CD4-positive, alpha-beta T cell (primary cell): ENCODE measurements at regions of chr2 and their contacts with region 1.

Region 1: DNA sequence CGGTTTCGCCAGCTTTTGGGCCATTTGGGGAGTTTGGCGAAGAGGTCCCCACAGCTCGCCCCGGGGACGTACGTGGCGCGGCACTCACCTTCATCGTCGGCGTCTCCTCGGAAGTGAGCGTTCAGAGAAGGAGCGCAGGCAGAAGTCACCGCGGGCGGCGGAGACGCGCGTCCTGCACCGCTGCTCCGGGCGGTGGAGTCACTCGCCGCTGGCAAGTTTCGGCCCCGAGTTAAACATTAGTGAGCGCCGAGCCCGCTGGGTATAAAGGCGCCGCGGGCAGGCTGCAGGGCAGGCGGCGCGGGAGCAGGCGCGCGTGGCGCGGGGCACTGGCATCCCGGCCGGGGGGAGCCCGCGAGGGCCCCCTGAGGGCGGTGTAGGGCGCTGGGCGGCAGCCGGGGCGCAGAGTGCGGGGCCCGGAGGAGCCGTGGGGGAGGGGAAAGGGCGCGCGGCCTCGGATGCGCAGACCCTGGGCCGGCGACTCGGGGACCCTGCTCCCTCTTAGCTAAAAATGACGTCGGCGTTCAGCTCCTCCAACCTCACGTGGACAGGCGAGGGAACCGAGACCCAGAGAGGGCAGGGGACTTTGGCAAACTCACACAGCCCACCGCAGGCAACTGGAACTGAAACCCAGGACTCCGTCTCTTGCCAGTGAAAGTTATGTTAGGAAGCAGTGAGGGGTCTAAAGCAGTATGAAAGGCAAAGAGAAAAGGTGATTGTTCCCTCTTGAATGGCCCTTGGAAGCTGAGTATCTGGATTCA is at the start of gene DPP4:
- DNase-seq: peak; percentile 21 to 78 (median 48)
- ATAC-seq: peak; percentile 80
- H3K4me3 ChIP-seq: peak within 1 kb of the TSS; percentile 85
- H3K4me3 Mint-ChIP-seq: peak within 1 kb of the TSS; percentile 95
- H3K27ac ChIP-seq: peak within 1 kb of the TSS; percentile 57 to 60
- H3K27ac Mint-ChIP-seq: peak within 1 kb of the TSS; percentile 85
- H3K4me1 ChIP-seq: peaks cover 23% of the 10 kb centered on the region
- H3K4me1 Mint-ChIP-seq: peaks cover 52% of the 10 kb centered on the region
- H3K27me3 ChIP-seq: no peaks in the 10 kb centered on the region
- H3K27me3 Mint-ChIP-seq: no peaks in the 10 kb centered on the region
- CTCF ChIP-seq: no peak
- total RNA-seq, gene DPP4: 15.5 to 16.7 TPM

Region 2: DNA sequence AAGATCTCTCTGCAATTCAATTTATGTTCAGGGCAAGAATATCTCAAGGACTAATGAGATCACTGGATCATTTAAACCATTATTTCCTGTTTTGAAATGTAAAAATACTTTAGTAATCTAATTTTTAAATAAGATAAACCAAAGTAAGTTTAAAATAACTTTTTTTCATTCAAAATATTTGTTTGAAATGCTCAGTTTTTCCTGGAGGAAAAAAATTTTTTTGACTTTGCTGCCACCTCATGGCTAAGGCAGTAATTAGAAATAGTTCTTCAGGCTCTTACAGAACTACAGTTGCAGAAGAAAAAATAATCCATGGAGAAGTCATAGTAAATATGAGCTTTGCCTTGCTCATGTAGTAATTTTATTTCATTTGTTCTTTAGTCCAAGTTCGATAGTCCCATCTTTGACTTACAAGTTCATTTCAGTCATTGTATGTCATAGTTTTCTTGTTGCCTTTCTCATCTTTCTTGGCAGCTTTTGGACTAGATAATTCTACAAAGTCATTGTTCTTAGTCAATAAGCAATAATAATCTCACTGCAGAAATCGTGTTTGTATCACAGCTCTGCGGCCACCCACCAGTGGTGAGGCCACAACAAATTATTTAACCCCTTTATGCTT is 127.5 kb before region 1 on chr2:
- CTCF ChIA-PET with region 1: no interaction called
- POLR2A ChIA-PET with region 1: no interaction called
- intact Hi-C with region 1: no loop called
- DNase-seq: peak in 4 of 14 experiments; percentile 12 to 48 (median 41)
- ATAC-seq: no peak
- H3K4me3 ChIP-seq: no peak overlapping the region
- H3K4me3 Mint-ChIP-seq: no peak overlapping the region
- H3K27ac ChIP-seq: no peak overlapping the region
- H3K27ac Mint-ChIP-seq: no peak overlapping the region
- H3K4me1 ChIP-seq: no peaks in the 10 kb centered on the region
- H3K4me1 Mint-ChIP-seq: no peaks in the 10 kb centered on the region
- H3K27me3 ChIP-seq: no peaks in the 10 kb centered on the region
- H3K27me3 Mint-ChIP-seq: no peaks in the 10 kb centered on the region
- CTCF ChIP-seq: peak; percentile 78

Region 3: GRCh38 chr2:161992526-161992925 is 81.5 kb before region 1 on chr2:
- CTCF ChIA-PET with region 1: interaction called, 3 read pairs
- POLR2A ChIA-PET with region 1: interaction called, 11 read pairs
- intact Hi-C with region 1: no loop called
- DNase-seq: peak; percentile 18 to 83 (median 44)
- ATAC-seq: peak; percentile 75
- H3K4me3 ChIP-seq: peak overlapping the region; percentile 27
- H3K4me3 Mint-ChIP-seq: peak overlapping the region; percentile 88
- H3K27ac ChIP-seq: peak overlapping the region; percentile 65 to 78
- H3K27ac Mint-ChIP-seq: peak overlapping the region; percentile 94
- H3K4me1 ChIP-seq: peaks cover 34% of the 10 kb centered on the region
- H3K4me1 Mint-ChIP-seq: peaks cover 51% of the 10 kb centered on the region
- H3K27me3 ChIP-seq: no peaks in the 10 kb centered on the region
- H3K27me3 Mint-ChIP-seq: no peaks in the 10 kb centered on the region
- CTCF ChIP-seq: no peak

Region 4: GRCh38 chr2:162007447-162008040 is 66.5 kb before region 1 on chr2:
- CTCF ChIA-PET with region 1: interaction called, 4 read pairs
- POLR2A ChIA-PET with region 1: interaction called, 48 read pairs
- intact Hi-C with region 1: loop called in 1 of 2 experiments (anchors 2 kb)
- DNase-seq: peak in 3 of 14 experiments; percentile 55 to 61 (median 55)
- ATAC-seq: no peak
- H3K4me3 ChIP-seq: no peak overlapping the region
- H3K4me3 Mint-ChIP-seq: no peak overlapping the region
- H3K27ac ChIP-seq: no peak overlapping the region
- H3K27ac Mint-ChIP-seq: peak overlapping the region; percentile 7
- H3K4me1 ChIP-seq: peaks cover 15% of the 10 kb centered on the region
- H3K4me1 Mint-ChIP-seq: peaks cover 53% of the 10 kb centered on the region
- H3K27me3 ChIP-seq: no peaks in the 10 kb centered on the region
- H3K27me3 Mint-ChIP-seq: no peaks in the 10 kb centered on the region
- CTCF ChIP-seq: peak; percentile 89

Region 5: DNA sequence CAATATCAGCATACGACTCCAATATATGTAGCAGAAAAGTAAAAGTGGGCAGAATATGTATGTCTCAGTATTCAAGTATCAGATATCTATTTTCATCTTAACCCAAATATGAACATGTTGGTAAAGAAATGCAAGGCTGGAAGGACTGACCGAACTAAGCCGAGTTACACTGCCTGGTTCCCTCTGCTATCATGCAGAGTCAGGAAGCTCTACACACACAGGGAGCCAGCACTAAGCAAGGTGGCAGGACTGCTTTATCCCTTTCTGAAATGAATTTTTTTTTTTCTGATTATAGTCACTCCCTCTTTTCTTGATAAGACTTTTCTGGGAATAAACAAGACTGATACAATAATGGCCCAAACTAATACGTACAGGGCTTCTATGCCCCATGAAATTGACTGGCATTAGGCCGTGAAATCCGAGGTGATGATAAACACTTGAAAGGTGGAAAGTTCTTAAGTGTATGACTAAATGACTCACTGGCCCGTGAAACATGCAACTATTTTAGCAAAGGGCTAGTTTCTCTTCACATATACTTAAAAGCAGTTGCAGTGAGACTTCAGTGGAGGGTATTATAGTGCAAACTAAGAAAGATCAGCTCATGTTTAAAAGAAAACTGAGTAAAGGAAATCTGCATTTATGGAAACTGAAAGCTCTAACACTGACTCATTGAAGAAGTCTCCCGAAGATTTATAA is 14.9 kb before region 1 on chr2:
- CTCF ChIA-PET with region 1: interaction called, 3 read pairs
- POLR2A ChIA-PET with region 1: interaction called, 37 read pairs
- intact Hi-C with region 1: loop called in 1 of 2 experiments (anchors 2 kb)
- DNase-seq: peak in 4 of 14 experiments; percentile 25 to 40 (median 32)
- ATAC-seq: peak; percentile 34
- H3K4me3 ChIP-seq: peak overlapping the region; percentile 41
- H3K4me3 Mint-ChIP-seq: peak overlapping the region; percentile 75
- H3K27ac ChIP-seq: peak overlapping the region in 1 of 2 donors; percentile 37
- H3K27ac Mint-ChIP-seq: peak overlapping the region; percentile 77
- H3K4me1 ChIP-seq: peaks cover 48% of the 10 kb centered on the region
- H3K4me1 Mint-ChIP-seq: peaks cover 85% of the 10 kb centered on the region
- H3K27me3 ChIP-seq: no peaks in the 10 kb centered on the region
- H3K27me3 Mint-ChIP-seq: no peaks in the 10 kb centered on the region
- CTCF ChIP-seq: no peak

Region 6: DNA sequence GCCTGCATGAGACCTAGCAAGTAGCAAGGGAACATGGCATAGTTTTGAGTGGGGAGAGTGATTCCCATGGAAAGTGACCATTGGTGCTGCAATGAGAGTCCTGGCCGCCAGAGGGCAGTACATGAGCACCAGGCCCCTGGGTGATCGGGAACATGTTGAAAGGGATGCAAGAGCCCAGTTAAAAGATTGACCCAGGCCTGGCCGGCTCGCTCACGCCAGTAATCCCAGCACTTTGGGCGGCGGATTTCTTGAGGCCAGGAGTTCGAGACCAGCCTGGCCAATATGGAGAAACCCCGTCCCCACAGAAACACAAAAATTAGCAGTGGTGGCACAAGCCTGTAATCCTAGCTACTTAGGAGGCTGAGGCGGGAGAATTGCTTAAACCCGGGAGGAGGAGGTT is 147.0 kb after region 1 on chr2:
- CTCF ChIA-PET with region 1: no interaction called
- POLR2A ChIA-PET with region 1: no interaction called
- intact Hi-C with region 1: no loop called
- DNase-seq: peak; percentile 7 to 67 (median 38)
- ATAC-seq: peak; percentile 66
- H3K4me3 ChIP-seq: no peak overlapping the region
- H3K4me3 Mint-ChIP-seq: no peak overlapping the region
- H3K27ac ChIP-seq: no peak overlapping the region
- H3K27ac Mint-ChIP-seq: no peak overlapping the region
- H3K4me1 ChIP-seq: no peaks in the 10 kb centered on the region
- H3K4me1 Mint-ChIP-seq: no peaks in the 10 kb centered on the region
- H3K27me3 ChIP-seq: peaks cover 2 to 9% of the 10 kb centered on the region in 2 experiments
- H3K27me3 Mint-ChIP-seq: peaks cover 30% of the 10 kb centered on the region
- CTCF ChIP-seq: peak; percentile 81

Region 7: DNA sequence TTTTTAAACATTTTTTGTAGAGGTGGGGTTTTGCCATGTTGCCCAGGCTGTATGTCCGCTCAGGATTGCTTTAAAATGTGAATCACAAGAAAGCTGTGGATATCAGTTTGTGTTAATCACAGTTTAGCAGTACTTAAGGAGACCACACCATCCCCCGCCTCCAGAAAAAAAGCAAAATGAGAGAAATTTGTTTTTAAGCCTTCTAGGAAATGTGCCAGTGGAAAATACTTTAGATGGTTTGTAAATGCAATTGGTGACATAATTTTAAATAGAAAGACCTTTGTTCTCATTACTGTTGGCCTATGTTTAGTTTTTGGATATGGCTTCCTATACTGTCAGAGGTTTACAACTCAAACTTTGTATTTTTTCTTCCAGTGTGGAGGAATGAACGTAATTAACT is 296.9 kb after region 1 on chr2:
- CTCF ChIA-PET with region 1: no interaction called
- POLR2A ChIA-PET with region 1: no interaction called
- intact Hi-C with region 1: no loop called
- DNase-seq: no peak
- ATAC-seq: no peak
- H3K4me3 ChIP-seq: no peak overlapping the region
- H3K4me3 Mint-ChIP-seq: no peak overlapping the region
- H3K27ac ChIP-seq: no peak overlapping the region
- H3K27ac Mint-ChIP-seq: no peak overlapping the region
- H3K4me1 ChIP-seq: no peaks in the 10 kb centered on the region
- H3K4me1 Mint-ChIP-seq: no peaks in the 10 kb centered on the region
- H3K27me3 ChIP-seq: no peaks in the 10 kb centered on the region
- H3K27me3 Mint-ChIP-seq: peaks cover 11% of the 10 kb centered on the region
- CTCF ChIP-seq: no peak